ENCODE measurements at regions of chr1 and their contacts with region 1.

Region 1: DNA sequence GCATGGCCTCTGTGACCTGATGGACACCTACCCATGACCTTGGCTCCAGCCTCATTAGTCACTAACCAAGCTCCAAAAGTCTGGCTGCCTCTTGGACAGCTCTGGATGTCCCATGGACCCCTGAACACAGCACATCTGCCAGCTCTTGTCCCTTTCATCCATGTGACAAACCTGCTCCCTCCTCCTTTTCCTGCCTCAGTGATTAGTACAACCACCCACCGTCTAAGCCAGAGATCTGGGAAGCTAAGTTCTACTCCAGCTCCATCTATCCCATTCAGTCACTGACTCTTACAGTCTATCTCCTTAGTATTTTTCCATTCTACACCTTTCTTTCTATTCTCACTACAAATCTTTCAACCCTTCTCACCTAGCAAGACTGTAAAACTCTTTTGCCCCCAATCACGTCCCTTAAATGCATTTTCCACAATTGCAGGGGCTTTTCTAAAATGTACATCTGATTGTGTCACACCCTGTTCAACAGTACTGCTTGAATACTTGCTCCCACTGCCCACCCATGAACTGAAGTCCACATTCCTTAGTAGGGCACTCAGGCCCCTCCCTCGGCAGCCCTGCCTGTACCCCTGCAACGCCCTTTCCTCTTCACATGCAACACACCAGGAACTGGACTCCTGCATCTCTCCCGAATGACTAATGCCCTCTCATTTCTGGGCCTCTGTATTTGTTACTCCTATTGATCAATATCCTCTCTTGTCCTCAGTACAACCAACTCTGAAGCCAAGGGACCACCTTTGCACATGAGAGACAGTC is 7.2 kb downstream of the GPN2 start:
- DNase-seq: peak in 1 of 3 donors; percentile 24
- ATAC-seq: no peak
- H3K4me3 ChIP-seq: no peak overlapping the region
- H3K4me1 ChIP-seq: peaks cover 13% of the 10 kb centered on the region
- CTCF ChIP-seq: no peak

Region 2: GRCh38 chr1:26771643-26772321 is 111.1 kb before region 1 on chr1:
- intact Hi-C with region 1: no loop called
- DNase-seq: no peak
- ATAC-seq: peak; percentile 72
- H3K4me3 ChIP-seq: no peak overlapping the region
- H3K4me1 ChIP-seq: peaks cover 7% of the 10 kb centered on the region
- CTCF ChIP-seq: no peak

Region 3: GRCh38 chr1:26848947-26849774 is 33.7 kb before region 1 on chr1:
- intact Hi-C with region 1: loop called in 1 of 2 experiments (anchors 5 kb)
- DNase-seq: peak; percentile 93 to 94 (median 93)
- ATAC-seq: peak; percentile 90
- H3K4me3 ChIP-seq: no peak overlapping the region
- H3K4me1 ChIP-seq: peaks cover 27% of the 10 kb centered on the region
- CTCF ChIP-seq: no peak

Region 4: GRCh38 chr1:28160782-28161266 is 1277.9 kb after region 1 on chr1:
- intact Hi-C with region 1: no loop called
- DNase-seq: peak in 1 of 3 donors; percentile 31
- ATAC-seq: peak; percentile 86
- H3K4me3 ChIP-seq: no peak overlapping the region
- H3K4me1 ChIP-seq: no peaks in the 10 kb centered on the region
- CTCF ChIP-seq: no peak

Measured in mucosa of descending colon (tissue), 3 donors.